ENCODE measurements at regions of chr1 and their contacts with region 1.

Region 1: DNA sequence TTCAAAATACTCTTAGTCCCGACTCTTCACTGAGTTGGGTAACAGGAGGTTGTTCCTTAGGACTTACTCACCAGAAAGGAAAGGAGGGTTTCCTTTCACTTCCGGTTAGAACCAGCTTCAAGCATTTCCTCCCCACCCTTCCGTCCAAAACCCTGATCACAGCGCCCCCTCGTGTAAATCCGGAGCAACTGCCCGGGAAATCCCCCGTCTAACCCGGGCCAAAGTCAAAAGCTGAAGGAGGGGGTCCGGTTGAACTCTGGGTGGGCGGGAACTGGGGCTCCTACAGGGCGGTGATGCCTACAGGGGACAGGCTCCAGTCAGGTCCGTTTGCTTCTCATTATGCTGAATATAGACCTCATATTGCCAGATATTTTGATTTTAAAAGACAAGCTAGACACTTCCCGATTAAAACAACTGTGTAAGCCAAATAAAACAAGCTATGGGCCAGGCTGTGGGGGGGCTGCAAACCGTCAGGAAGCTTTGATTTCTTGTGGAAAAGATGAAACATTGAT is 15.0 kb upstream of the MTARC2 start:
- DNase-seq: peak; percentile 60
- H3K4me3 ChIP-seq: no peak overlapping the region
- H3K27ac ChIP-seq: peak overlapping the region; percentile 73 to 80
- H3K4me1 ChIP-seq: no peaks in the 10 kb centered on the region
- H3K27me3 ChIP-seq: no peaks in the 10 kb centered on the region
- CTCF ChIP-seq: peak; percentile 80 to 98 (median 90)
- POLR2A ChIP-seq: no peak

Region 2: DNA sequence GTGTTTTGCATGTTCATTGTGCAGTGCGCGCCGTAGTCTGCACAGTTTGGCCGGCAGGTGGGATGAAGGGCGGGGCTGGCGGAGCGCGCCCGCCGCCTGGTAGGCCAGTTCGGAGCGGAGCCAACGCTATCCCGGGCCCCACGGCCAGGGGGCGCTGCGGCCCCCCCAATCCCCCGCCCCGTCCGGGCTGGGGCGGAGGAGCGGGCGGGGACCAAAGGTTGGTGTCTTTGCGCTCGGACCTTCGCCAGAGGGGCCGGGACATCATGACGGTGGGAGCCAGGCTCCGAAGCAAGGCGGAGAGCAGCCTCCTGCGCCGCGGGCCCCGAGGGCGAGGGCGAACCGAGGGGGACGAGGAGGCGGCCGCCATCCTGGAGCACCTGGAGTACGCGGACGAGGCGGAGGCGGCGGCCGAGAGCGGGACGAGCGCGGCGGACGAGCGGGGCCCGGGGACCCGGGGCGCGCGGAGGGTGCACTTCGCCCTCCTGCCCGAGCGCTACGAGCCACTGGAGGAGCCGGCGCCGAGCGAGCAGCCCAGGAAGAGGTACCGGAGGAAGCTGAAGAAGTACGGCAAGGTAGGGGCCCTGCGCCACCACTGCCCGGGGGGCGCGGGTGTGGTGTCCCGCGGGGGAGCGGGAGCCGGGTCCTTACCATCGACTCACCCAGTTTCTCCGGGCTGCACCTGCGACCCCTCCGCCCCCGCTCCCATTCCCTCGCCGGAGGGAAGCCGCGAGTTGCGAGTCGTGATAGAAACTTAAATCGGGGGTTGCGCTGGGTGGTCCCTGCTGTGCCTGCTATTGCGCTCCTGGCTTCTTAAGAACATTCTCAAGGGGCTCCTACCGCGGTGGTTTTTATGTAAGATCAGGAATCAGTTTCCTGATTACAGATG is 42.8 kb before region 1 on chr1 and contains the start of gene C1orf115:
- intact Hi-C with region 1: loop called (anchors 5 kb)
- DNase-seq: peak; percentile 75
- H3K4me3 ChIP-seq: peak within 1 kb of the TSS; percentile 77 to 90
- H3K27ac ChIP-seq: peak within 1 kb of the TSS; percentile 75 to 78
- H3K4me1 ChIP-seq: no peaks in the 10 kb centered on the region
- H3K27me3 ChIP-seq: no peaks in the 10 kb centered on the region
- CTCF ChIP-seq: peak; percentile 90 to 98 (median 94)
- POLR2A ChIP-seq: peak; percentile 51
- total RNA-seq, gene C1orf115: 26.9 to 79.4 TPM

Measured in prostate gland (tissue), 2 donors.